ENCODE measurements at regions of chr5 and their contacts with region 1.

Region 1: GRCh38 chr5:142221091-142221860 is 103.5 kb downstream of the SPRY4 start:
- DNase-seq: no peak
- H3K4me3 ChIP-seq: no peak overlapping the region
- H3K4me3 Mint-ChIP-seq: no peak overlapping the region
- H3K27ac ChIP-seq: no peak overlapping the region
- H3K27ac Mint-ChIP-seq: peak overlapping the region in 4 of 7 donors; percentile 6 to 58 (median 45)
- H3K4me1 ChIP-seq: peaks cover 32% of the 10 kb centered on the region
- H3K4me1 Mint-ChIP-seq: peaks cover 22 to 44% (median 33%) of the 10 kb centered on the region in 4 donors
- H3K27me3 ChIP-seq: no peaks in the 10 kb centered on the region
- H3K27me3 Mint-ChIP-seq: no peaks in the 10 kb centered on the region

Region 2: DNA sequence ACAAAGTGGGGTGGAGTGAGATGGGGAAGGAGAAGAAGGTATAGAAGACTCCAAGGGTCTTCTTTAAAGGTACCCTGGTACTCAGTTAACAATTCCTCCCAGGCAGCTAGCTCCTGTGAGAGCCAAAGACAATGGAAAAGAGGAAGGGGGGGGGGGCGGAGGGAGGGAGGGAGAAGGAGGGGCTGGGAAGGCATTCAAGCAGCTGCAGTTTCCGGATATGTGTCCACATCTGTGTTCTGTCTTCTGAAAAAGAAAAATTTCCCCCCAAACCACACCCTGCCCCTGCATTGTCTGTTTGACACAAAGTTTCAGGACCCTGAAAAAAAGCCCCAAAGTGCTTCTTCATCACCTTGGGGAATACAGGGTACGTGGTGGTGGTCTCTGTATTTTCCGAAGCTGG is 92.4 kb after region 1 on chr5:
- CTCF ChIA-PET with region 1: no interaction called
- POLR2A ChIA-PET with region 1: no interaction called
- intact Hi-C with region 1: no loop called
- DNase-seq: no peak
- H3K4me3 ChIP-seq: no peak overlapping the region
- H3K4me3 Mint-ChIP-seq: no peak overlapping the region
- H3K27ac ChIP-seq: no peak overlapping the region
- H3K27ac Mint-ChIP-seq: no peak overlapping the region
- H3K4me1 ChIP-seq: peaks cover 18% of the 10 kb centered on the region
- H3K4me1 Mint-ChIP-seq: peaks cover 9 to 18% (median 12%) of the 10 kb centered on the region in 4 donors
- H3K27me3 ChIP-seq: no peaks in the 10 kb centered on the region
- H3K27me3 Mint-ChIP-seq: peaks cover 2% of the 10 kb centered on the region in 2 donors

Region 3: GRCh38 chr5:142324871-142325724 is 103.8 kb after region 1 on chr5 and contains the start of gene SPRY4:
- CTCF ChIA-PET with region 1: interaction called, 3 read pairs
- POLR2A ChIA-PET with region 1: interaction called, 8 read pairs
- intact Hi-C with region 1: loop called (anchors 2 kb)
- DNase-seq: peak; percentile 74 to 81 (median 80)
- H3K4me3 ChIP-seq: peak within 1 kb of the TSS; percentile 39 to 50
- H3K4me3 Mint-ChIP-seq: peak within 1 kb of the TSS; percentile 83 to 95 (median 88)
- H3K27ac ChIP-seq: no peak within 1 kb of the TSS
- H3K27ac Mint-ChIP-seq: peak within 1 kb of the TSS in 3 of 7 donors; percentile 73 to 88 (median 76)
- H3K4me1 ChIP-seq: peaks cover 29% of the 10 kb centered on the region
- H3K4me1 Mint-ChIP-seq: peaks cover 9 to 34% (median 20%) of the 10 kb centered on the region in 4 donors
- H3K27me3 ChIP-seq: peaks cover 15% of the 10 kb centered on the region
- H3K27me3 Mint-ChIP-seq: peaks cover 24 to 36% of the 10 kb centered on the region in 2 donors
- total RNA-seq, gene SPRY4: not detected

Region 4: GRCh38 chr5:142432369-142432863 is 211.1 kb after region 1 on chr5:
- CTCF ChIA-PET with region 1: no interaction called
- POLR2A ChIA-PET with region 1: interaction called, 4 read pairs
- intact Hi-C with region 1: loop called (anchors 2 kb)
- DNase-seq: peak in 3 of 5 donors; percentile 31 to 71 (median 39)
- H3K4me3 ChIP-seq: peak overlapping the region in 1 of 2 donors; percentile 25
- H3K4me3 Mint-ChIP-seq: peak overlapping the region in 7 of 8 donors; percentile 68 to 87 (median 76)
- H3K27ac ChIP-seq: peak overlapping the region; percentile 62
- H3K27ac Mint-ChIP-seq: peak overlapping the region; percentile 92 to 99 (median 96)
- H3K4me1 ChIP-seq: peaks cover 61% of the 10 kb centered on the region
- H3K4me1 Mint-ChIP-seq: peaks cover 37 to 78% (median 56%) of the 10 kb centered on the region in 4 donors
- H3K27me3 ChIP-seq: no peaks in the 10 kb centered on the region
- H3K27me3 Mint-ChIP-seq: no peaks in the 10 kb centered on the region

Measured in CD4-positive, alpha-beta memory T cell (primary cell).